ENCODE measurements at regions of chr3 and their contacts with region 1.

Region 1: GRCh38 chr3:189961525-189962161 is 159.1 kb downstream of the P3H2 start:
- DNase-seq: peak; percentile 21 to 63 (median 23)
- H3K4me3 ChIP-seq: no peak overlapping the region
- H3K4me3 Mint-ChIP-seq: no peak overlapping the region
- H3K27ac ChIP-seq: no peak overlapping the region
- H3K27ac Mint-ChIP-seq: no peak overlapping the region
- H3K4me1 ChIP-seq: no peaks in the 10 kb centered on the region
- H3K4me1 Mint-ChIP-seq: peaks cover 0 to 6% (median 5%) of the 10 kb centered on the region in 3 donors
- H3K27me3 ChIP-seq: peaks cover 3% of the 10 kb centered on the region
- H3K27me3 Mint-ChIP-seq: peaks cover 10 to 29% of the 10 kb centered on the region in 2 donors

Region 2: DNA sequence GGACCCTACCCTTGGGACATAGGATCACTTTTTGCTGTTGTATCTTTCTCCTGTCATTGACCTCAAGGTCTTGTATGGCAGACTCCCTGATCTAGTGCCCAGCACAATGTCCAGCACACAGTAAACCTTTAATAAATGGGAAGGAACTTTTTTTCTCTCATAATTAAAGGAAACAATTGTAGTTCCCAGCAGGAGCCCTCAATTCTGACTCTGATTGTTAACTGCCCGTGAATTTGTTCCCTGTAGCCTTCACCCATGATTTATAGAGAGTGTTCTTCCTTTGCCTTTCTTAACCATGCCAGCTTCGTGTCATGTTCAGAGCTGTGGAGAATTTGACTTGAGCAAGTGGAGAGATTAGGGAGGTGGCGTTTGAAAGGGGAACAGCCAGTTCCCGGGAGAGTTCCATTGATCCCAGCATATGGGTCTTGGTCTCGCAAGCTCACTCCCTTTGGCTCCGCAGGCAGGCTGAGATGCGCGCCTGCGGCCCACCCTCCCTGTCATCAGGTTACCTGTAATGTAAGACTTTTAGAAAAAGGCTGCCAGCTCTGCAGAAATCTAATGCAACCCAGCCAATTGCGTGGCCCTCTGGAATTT is 147.9 kb before region 1 on chr3:
- CTCF ChIA-PET with region 1: no interaction called
- POLR2A ChIA-PET with region 1: no interaction called
- DNase-seq: no peak
- H3K4me3 ChIP-seq: no peak overlapping the region
- H3K4me3 Mint-ChIP-seq: no peak overlapping the region
- H3K27ac ChIP-seq: no peak overlapping the region
- H3K27ac Mint-ChIP-seq: no peak overlapping the region
- H3K4me1 ChIP-seq: no peaks in the 10 kb centered on the region
- H3K4me1 Mint-ChIP-seq: no peaks in the 10 kb centered on the region
- H3K27me3 ChIP-seq: no peaks in the 10 kb centered on the region
- H3K27me3 Mint-ChIP-seq: peaks cover 0 to 1% of the 10 kb centered on the region in 2 donors

Region 3: GRCh38 chr3:189947948-189948723 is 13.5 kb before region 1 on chr3:
- CTCF ChIA-PET with region 1: interaction called, 44 read pairs
- POLR2A ChIA-PET with region 1: no interaction called
- DNase-seq: no peak
- H3K4me3 ChIP-seq: no peak overlapping the region
- H3K4me3 Mint-ChIP-seq: no peak overlapping the region
- H3K27ac ChIP-seq: no peak overlapping the region
- H3K27ac Mint-ChIP-seq: no peak overlapping the region
- H3K4me1 ChIP-seq: no peaks in the 10 kb centered on the region
- H3K4me1 Mint-ChIP-seq: peaks cover 4 to 7% (median 5%) of the 10 kb centered on the region in 3 donors
- H3K27me3 ChIP-seq: no peaks in the 10 kb centered on the region
- H3K27me3 Mint-ChIP-seq: peaks cover 6 to 9% of the 10 kb centered on the region in 2 donors